Activated CD4-positive, alpha-beta T cell treated with anti-CD3 and anti-CD28 coated beads for 36 hours (primary cell): ENCODE measurements at regions of chr7 and their contacts with region 1.

Region 1: GRCh38 chr7:72069263-72069662 is 342.9 kb downstream of the CALN1 start:
- DNase-seq: no peak
- ATAC-seq: no peak
- H3K4me3 Mint-ChIP-seq: no peak overlapping the region
- H3K27ac Mint-ChIP-seq: no peak overlapping the region
- H3K4me1 Mint-ChIP-seq: no peaks in the 10 kb centered on the region
- H3K27me3 Mint-ChIP-seq: no peaks in the 10 kb centered on the region

Region 2: GRCh38 chr7:72053292-72053691 is 16.0 kb before region 1 on chr7:
- CTCF ChIA-PET with region 1: no interaction called
- POLR2A ChIA-PET with region 1: no interaction called
- intact Hi-C with region 1: no loop called
- DNase-seq: no peak
- ATAC-seq: no peak
- H3K4me3 Mint-ChIP-seq: no peak overlapping the region
- H3K27ac Mint-ChIP-seq: no peak overlapping the region
- H3K4me1 Mint-ChIP-seq: peaks cover 5% of the 10 kb centered on the region
- H3K27me3 Mint-ChIP-seq: no peaks in the 10 kb centered on the region

Region 3: DNA sequence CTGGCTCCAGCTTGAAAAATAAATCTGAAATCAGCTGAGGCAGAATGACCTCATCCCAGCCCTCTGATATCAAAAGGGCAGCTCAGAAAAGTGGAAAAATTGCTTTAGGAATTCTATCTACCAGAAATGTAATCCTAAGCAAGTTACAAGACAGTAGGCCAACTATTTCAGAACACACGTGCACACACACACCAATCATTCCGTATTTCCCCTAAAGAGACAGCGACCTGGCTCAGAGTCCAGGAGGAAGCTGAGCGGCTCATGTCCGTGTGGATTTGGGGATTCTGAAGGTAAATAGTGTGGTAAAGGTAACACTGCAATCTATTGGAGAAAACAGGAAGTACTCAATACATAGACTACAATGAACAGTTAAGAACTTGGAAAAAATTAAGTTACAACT is 54.6 kb after region 1 on chr7:
- CTCF ChIA-PET with region 1: no interaction called
- POLR2A ChIA-PET with region 1: no interaction called
- intact Hi-C with region 1: loop called in 1 of 2 experiments (anchors 10 kb)
- DNase-seq: no peak
- ATAC-seq: no peak
- H3K4me3 Mint-ChIP-seq: no peak overlapping the region
- H3K27ac Mint-ChIP-seq: no peak overlapping the region
- H3K4me1 Mint-ChIP-seq: no peaks in the 10 kb centered on the region
- H3K27me3 Mint-ChIP-seq: no peaks in the 10 kb centered on the region

Region 4: GRCh38 chr7:72286519-72286918 is 217.3 kb after region 1 on chr7:
- CTCF ChIA-PET with region 1: no interaction called
- POLR2A ChIA-PET with region 1: no interaction called
- intact Hi-C with region 1: no loop called
- DNase-seq: no peak
- ATAC-seq: no peak
- H3K4me3 Mint-ChIP-seq: no peak overlapping the region
- H3K27ac Mint-ChIP-seq: no peak overlapping the region
- H3K4me1 Mint-ChIP-seq: no peaks in the 10 kb centered on the region
- H3K27me3 Mint-ChIP-seq: no peaks in the 10 kb centered on the region